Calu3 (cell line): ENCODE measurements at regions of chr9 and their contacts with region 1.

Region 1: DNA sequence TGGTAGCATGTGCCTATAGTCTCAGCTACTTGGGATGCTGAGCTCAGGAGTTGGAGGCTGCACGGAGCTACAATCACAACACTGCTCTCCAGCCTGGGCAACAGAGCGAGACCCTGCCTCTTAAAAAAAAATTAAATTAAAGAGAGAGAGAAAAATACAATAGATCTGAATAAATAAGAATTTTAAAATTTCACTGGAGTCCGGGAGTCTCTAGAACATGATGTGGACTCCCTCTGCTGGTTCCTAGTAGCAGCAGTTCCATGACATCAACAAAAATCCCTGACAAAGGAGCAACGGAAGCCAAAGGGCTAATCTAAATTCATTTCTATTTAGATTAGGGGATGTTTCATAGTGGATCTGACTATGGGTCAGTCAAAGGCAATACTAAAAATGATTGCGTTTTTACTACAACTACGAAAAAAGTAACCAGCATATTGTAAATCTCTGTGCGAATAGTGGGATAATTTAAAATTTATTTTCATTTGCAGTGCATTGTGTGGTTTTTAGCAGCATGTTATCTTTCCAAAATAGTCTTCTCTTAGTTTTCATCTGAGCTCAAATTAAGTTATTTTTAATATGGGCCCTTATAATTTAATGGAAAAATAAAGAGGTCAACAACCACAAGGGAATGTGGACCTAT is 6.7 kb downstream of the INIP start:
- DNase-seq: no peak
- H3K4me3 Mint-ChIP-seq: no peak overlapping the region
- H3K27ac Mint-ChIP-seq: no peak overlapping the region
- H3K4me1 Mint-ChIP-seq: no peaks in the 10 kb centered on the region
- H3K27me3 Mint-ChIP-seq: no peaks in the 10 kb centered on the region
- CTCF ChIP-seq: peak; percentile 34

Region 2: GRCh38 chr9:112443200-112443599 is 268.0 kb before region 1 on chr9:
- CTCF ChIA-PET with region 1: no interaction called
- intact Hi-C with region 1: loop called (anchors 5 kb)
- DNase-seq: no peak
- H3K4me3 Mint-ChIP-seq: no peak overlapping the region
- H3K27ac Mint-ChIP-seq: no peak overlapping the region
- H3K4me1 Mint-ChIP-seq: peaks cover 8% of the 10 kb centered on the region
- H3K27me3 Mint-ChIP-seq: no peaks in the 10 kb centered on the region
- CTCF ChIP-seq: no peak